Left colon (tissue), 2 donors: ENCODE measurements at regions of chr20 and their contacts with region 1.

Region 1: GRCh38 chr20:48657475-48658470 is 170.0 kb downstream of the PREX1 start:
- DNase-seq: peak; percentile 42 to 61
- ATAC-seq: peak; percentile 90

Region 2: GRCh38 chr20:48012197-48013085 is 645.3 kb before region 1 on chr20:
- intact Hi-C with region 1: no loop called
- DNase-seq: no peak
- ATAC-seq: no peak

Region 3: GRCh38 chr20:48425817-48426612 is 231.8 kb before region 1 on chr20:
- intact Hi-C with region 1: no loop called
- DNase-seq: no peak
- ATAC-seq: no peak

Region 4: DNA sequence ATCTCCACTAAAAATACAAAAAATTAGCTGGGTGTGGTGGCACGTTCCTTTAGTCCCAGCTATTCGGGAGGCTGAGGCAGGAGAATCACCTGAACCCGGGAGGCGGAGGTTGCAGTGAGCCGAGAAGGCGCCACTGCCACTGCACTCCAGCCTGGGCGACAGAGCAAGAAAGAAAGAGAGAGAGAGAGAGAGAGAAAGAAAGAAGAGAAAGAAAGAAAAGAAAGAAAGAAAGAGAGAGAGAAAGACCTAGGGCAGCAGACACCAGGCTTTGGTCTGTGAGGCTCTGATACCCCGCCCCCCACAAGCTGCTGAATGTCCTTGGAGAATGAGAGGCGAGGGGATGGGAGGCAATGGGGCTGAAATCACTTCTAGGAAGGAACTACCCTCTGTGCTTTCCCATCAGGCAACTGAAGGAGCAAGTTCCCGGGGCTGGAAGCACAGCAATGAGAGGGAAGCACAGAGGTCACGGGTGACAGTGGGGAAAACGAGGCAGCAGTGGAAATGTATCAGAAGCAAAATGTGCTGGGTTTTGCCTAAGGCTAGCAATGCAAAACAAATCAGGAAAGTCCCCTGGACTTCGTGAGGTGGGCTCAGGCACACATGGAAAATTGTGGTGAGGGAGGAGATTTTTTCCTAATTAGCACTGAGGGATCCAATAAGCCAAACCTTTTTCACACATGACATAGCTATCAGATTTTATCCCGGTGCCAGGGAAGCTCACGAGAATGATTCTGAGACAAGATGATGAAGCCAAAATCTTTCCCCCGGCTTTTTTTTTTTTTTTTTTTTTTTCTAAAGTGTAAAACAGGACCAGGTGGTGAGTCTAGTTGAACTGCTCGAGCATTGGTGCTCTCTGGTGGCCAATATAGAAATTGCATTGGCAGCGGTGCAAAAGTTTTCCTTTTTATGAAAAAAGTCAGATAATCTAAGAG is 246.9 kb after region 1 on chr20:
- intact Hi-C with region 1: loop called (anchors 2 to 5 kb)
- DNase-seq: peak in 1 of 2 donors; percentile 63
- ATAC-seq: peak; percentile 70